Endothelial cell of umbilical vein (primary cell): ENCODE measurements at regions of chr12 and their contacts with region 1.

Region 1: GRCh38 chr12:44930972-44931600 is 55.0 kb upstream of the NELL2 start:
- DNase-seq: peak; percentile 74
- H3K4me3 ChIP-seq: no peak overlapping the region
- H3K27ac ChIP-seq: no peak overlapping the region
- H3K4me1 ChIP-seq: peaks cover 3% of the 10 kb centered on the region
- H3K27me3 ChIP-seq: no peaks in the 10 kb centered on the region
- CTCF ChIP-seq: peak; percentile 6 to 30
- POLR2A ChIP-seq: no peak

Region 2: DNA sequence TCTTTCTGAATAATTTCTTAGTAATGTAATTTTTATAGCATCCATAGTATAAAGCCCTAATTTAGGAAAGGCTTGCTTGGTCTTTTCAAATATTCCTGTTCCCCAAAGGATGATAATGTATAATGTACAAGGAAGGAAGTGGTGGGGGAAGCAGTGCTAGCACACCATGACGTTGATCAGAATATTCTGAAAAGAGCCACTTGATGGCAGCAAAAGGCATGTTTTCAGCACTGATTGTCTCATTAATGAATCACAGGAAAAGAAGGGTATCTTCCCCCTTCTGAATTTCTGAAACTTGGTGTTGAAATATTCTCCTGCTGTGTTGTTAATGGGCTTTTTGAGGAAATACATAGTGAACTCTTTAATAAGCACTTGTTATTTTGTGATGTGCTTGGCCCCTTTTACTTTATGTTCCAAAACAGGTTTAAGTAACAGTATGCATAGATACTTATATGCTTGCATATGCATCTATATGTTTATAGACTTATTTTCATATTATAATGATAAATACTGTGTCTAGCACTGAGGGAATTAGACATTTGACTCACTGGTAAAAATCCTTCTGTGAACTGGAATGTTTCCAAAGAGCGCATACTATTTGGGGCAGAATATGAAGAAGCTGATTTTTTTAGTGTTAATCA is 973.2 kb before region 1 on chr12:
- CTCF ChIA-PET with region 1: interaction called, 26 read pairs
- POLR2A ChIA-PET with region 1: no interaction called
- dilution Hi-C with region 1: no loop called
- intact Hi-C with region 1: loop called (anchors 1 kb)
- DNase-seq: peak; percentile 50
- H3K4me3 ChIP-seq: no peak overlapping the region
- H3K27ac ChIP-seq: no peak overlapping the region
- H3K4me1 ChIP-seq: no peaks in the 10 kb centered on the region
- H3K27me3 ChIP-seq: no peaks in the 10 kb centered on the region
- CTCF ChIP-seq: peak; percentile 33 to 34
- POLR2A ChIP-seq: no peak

Region 3: GRCh38 chr12:44000309-44000952 is 930.7 kb before region 1 on chr12:
- CTCF ChIA-PET with region 1: interaction called, 33 read pairs
- POLR2A ChIA-PET with region 1: no interaction called
- dilution Hi-C with region 1: no loop called
- intact Hi-C with region 1: loop called (anchors 1 kb)
- DNase-seq: peak; percentile 43
- H3K4me3 ChIP-seq: no peak overlapping the region
- H3K27ac ChIP-seq: no peak overlapping the region
- H3K4me1 ChIP-seq: no peaks in the 10 kb centered on the region
- H3K27me3 ChIP-seq: no peaks in the 10 kb centered on the region
- CTCF ChIP-seq: peak; percentile 70 to 81
- POLR2A ChIP-seq: no peak

Region 4: DNA sequence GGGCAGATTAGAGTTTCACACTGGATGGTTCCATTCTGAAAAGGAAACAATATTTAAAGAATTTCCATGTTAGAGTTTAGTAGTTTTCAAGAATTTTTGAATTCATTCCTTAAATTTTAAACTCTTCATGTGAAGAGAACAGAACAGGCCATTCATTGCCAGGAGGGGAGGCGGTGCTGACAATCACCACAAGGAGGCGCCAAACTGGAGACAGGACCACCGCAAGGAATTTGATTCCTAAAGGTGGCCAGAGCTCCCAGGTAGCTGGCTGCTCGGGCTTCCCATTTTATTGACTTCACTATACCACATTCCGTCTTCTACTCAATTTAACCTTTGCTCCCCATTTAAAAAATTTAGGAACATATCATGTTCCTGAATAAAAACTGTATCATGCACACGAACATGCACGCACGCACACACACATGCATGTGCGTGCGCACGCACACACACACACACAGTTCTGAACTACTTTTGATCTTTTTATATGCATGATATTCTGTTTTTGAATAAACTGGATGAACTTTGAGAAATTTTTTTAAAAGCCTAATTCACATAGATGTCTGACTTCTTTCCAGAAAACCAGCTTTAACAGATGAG is 156.2 kb before region 1 on chr12:
- CTCF ChIA-PET with region 1: interaction called, 111 read pairs
- POLR2A ChIA-PET with region 1: no interaction called
- dilution Hi-C with region 1: no loop called
- intact Hi-C with region 1: loop called (anchors 1 kb)
- DNase-seq: peak; percentile 41
- H3K4me3 ChIP-seq: no peak overlapping the region
- H3K27ac ChIP-seq: no peak overlapping the region
- H3K4me1 ChIP-seq: no peaks in the 10 kb centered on the region
- H3K27me3 ChIP-seq: no peaks in the 10 kb centered on the region
- CTCF ChIP-seq: peak; percentile 78 to 86
- POLR2A ChIP-seq: no peak

Region 5: DNA sequence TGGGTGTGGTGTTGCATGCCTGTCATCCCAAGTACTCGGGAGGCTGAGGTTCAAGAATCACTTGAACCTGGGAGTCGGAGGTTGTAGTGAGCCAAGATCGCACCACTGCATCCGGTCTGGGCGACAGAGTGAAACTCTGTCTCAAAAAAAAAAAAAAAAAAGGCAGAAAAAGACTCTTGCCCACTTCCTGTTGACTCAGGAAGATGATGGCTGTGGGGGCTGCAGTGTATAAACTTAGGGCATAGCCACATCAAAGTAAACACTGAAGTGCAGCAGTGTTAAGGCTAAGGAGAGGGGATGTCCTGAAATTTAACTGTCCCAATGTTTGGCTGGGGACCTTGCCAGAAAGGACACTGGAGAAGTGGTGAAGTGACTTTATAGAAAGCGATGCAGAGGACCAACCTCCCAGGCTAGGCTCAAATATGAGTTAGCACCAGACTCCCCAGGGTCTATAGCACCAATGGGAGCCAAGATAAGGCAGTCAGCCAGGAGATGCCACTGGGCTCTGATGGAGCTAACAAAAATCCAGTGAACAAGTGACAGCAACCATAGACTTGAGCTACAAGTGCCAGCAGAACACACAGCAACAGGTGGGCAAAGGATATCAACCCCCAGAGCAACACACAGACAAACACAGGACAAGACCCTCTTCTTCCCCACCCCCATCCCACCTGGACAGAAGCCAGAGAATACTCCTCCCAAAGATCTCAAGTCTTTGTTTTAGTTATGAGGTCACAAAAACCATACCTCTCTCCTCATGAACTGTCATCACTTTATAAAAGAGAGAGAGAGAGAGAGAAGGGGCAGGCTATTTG is 83.0 kb before region 1 on chr12:
- CTCF ChIA-PET with region 1: no interaction called
- POLR2A ChIA-PET with region 1: no interaction called
- dilution Hi-C with region 1: no loop called
- intact Hi-C with region 1: no loop called
- DNase-seq: no peak
- H3K4me3 ChIP-seq: no peak overlapping the region
- H3K27ac ChIP-seq: no peak overlapping the region
- H3K4me1 ChIP-seq: no peaks in the 10 kb centered on the region
- H3K27me3 ChIP-seq: no peaks in the 10 kb centered on the region
- CTCF ChIP-seq: no peak
- POLR2A ChIP-seq: no peak